ENCODE measurements at regions of chr1 and their contacts with region 1.

Region 1: DNA sequence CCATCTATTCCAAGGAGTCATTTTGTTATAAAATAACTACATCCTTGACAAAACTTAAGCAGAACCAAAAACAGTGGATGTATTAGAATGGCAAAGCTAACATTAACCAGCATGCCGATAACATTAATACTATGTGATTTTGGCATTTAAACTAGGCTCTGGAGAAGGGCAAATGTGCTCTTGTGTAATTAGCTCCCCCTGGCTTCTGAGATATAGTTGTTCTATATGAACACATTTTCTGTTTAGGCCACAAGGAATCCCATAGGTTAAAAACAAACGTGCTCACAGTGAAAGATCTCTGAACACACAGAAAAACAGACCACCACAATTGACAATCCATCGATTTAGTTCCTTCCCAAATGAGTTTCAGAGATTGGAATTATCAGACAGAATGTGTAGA is 57.4 kb upstream of the TARS2 start:
- DNase-seq: no peak
- ATAC-seq: peak; percentile 61
- H3K4me3 ChIP-seq: no peak overlapping the region
- H3K27ac ChIP-seq: no peak overlapping the region
- H3K4me1 ChIP-seq: no peaks in the 10 kb centered on the region
- H3K27me3 ChIP-seq: no peaks in the 10 kb centered on the region
- CTCF ChIP-seq: peak; percentile 13 to 48 (median 19); a peak in 3 of 6 replicates
- EP300 ChIP-seq: no peak
- POLR2A ChIP-seq: no peak
- RAD21 ChIP-seq: peak; percentile 41; the same call in 1 of the 2 replicates

Region 2: GRCh38 chr1:150221552-150221951 is 208.3 kb before region 1 on chr1:
- CTCF ChIA-PET with region 1: no interaction called
- POLR2A ChIA-PET with region 1: no interaction called
- RAD21 ChIA-PET with region 1: no interaction called
- SMC1A ChIA-PET with region 1: no interaction called
- in situ Hi-C with region 1: no loop called
- intact Hi-C with region 1: no loop called
- DNase-seq: no peak
- ATAC-seq: peak; percentile 72
- H3K4me3 ChIP-seq: no peak overlapping the region
- H3K27ac ChIP-seq: no peak overlapping the region
- H3K4me1 ChIP-seq: no peaks in the 10 kb centered on the region; the same call in 1 of the 2 replicates
- H3K27me3 ChIP-seq: no peaks in the 10 kb centered on the region
- CTCF ChIP-seq: peak; percentile 34 to 49 (median 43); a peak in 4 of 6 replicates
- EP300 ChIP-seq: no peak
- POLR2A ChIP-seq: no peak
- RAD21 ChIP-seq: peak; percentile 29; the same call in 1 of the 2 replicates

Region 3: DNA sequence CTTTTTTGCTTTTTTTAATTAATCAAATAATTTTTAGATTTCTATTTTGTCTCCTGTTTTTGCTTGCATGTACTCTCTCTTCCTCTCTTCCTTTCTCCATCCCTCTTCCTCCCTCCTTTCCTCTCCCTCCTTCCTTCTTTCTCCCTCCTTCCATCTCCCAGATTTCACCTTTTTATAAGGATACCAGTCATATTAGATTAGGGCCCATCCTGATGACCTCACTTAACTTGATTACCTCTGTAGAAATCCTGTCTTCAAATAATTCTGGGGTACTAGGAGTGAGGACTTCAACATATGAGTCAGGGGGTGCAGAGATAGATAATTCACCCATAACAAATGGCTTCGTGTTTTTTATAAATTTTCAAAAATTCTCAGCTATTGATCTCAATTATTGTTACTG is 19.6 kb after region 1 on chr1:
- CTCF ChIA-PET with region 1: no interaction called
- POLR2A ChIA-PET with region 1: no interaction called
- RAD21 ChIA-PET with region 1: no interaction called
- SMC1A ChIA-PET with region 1: no interaction called
- in situ Hi-C with region 1: no loop called
- intact Hi-C with region 1: loop called (anchors 2 kb)
- DNase-seq: no peak
- ATAC-seq: no peak
- H3K4me3 ChIP-seq: no peak overlapping the region
- H3K27ac ChIP-seq: no peak overlapping the region
- H3K4me1 ChIP-seq: no peaks in the 10 kb centered on the region
- H3K27me3 ChIP-seq: no peaks in the 10 kb centered on the region
- CTCF ChIP-seq: no peak
- EP300 ChIP-seq: no peak
- POLR2A ChIP-seq: no peak
- RAD21 ChIP-seq: no peak

Region 4: DNA sequence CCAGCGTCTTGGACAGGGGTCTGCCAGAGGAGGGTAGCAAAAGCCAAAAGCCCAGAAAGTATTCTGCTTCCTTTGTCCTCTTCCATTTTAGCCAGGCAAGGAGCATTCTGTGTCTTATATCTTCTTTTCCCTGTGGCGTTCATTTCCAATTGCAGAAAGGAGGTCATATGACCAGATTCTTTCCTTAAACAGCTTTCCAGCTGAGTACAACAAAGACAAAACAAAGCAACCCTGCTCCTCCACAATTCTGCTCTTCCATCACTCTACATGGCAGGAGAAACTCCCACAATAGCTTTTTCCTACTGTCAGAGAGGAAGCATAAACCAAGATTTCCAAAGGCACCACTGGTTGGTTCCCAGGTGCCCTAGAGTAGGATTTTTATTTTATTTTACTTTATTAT is 179.9 kb after region 1 on chr1:
- CTCF ChIA-PET with region 1: no interaction called
- POLR2A ChIA-PET with region 1: no interaction called
- RAD21 ChIA-PET with region 1: no interaction called
- SMC1A ChIA-PET with region 1: no interaction called
- in situ Hi-C with region 1: no loop called
- intact Hi-C with region 1: no loop called
- DNase-seq: no peak
- ATAC-seq: no peak
- H3K4me3 ChIP-seq: no peak overlapping the region
- H3K27ac ChIP-seq: no peak overlapping the region
- H3K4me1 ChIP-seq: peaks cover 36% of the 10 kb centered on the region
- H3K27me3 ChIP-seq: no peaks in the 10 kb centered on the region
- CTCF ChIP-seq: no peak
- EP300 ChIP-seq: no peak
- POLR2A ChIP-seq: no peak
- RAD21 ChIP-seq: no peak